IMR-90 (cell line): ENCODE measurements at regions of chr22 and their contacts with region 1.

Region 1: DNA sequence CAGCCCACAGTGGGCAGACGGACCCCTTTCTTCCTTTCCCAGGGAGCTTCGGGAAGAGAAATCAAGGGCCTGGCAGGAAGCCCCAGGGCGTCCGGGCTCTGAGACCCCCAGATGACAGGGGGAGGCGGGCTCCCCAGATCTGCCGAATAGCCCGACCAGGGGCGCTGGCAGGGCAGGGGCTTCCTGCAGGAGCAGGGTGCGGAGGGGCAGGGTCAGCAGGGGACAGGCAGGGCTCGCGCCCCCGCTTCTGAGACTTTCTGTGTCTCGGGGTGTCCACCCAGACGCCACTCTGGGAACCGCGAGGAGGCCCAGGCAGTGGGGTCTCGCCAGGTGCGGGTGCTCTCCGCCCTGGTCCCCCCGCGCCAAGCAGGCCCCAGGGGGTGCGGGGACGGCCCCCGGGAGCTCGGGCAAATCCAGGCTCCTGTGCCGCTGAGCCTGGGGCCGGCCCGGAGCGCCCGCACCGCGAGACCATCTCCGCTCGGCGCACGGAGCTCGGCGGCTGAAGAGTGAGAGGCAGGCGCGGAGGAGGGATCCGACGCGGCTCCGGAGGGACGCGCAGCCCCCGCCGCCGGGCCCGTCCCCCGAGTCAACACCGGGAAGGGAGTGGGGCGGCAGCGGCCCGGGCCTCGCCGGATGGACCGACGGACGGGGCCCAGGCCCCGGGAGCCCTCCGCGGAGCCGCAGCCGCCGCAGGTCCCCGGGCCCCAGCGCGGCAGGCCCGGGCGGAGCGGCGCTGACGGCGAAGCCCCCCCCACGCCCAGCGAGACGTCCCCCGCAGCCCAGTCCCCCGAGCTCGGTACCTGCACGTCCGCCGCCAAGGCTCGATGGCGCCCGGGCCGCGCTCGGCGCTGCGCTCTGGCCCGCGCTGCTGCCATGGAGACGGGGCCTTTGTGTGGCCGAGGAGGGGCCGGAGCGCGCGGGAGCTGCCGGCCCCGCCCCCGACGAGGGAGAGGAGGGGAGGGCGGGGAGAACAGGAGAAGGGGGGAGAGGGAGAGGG is at the start of gene PLXNB2:
- DNase-seq: peak; percentile 80
- ATAC-seq: peak; percentile 61
- H3K4me3 ChIP-seq: peak within 1 kb of the TSS; percentile 97
- H3K27ac ChIP-seq: peak within 1 kb of the TSS; percentile 96
- H3K4me1 ChIP-seq: peaks cover 48% of the 10 kb centered on the region
- H3K27me3 ChIP-seq: no peaks in the 10 kb centered on the region
- CTCF ChIP-seq: no peak
- POLR2A ChIP-seq: peak; percentile 69
- RAD21 ChIP-seq: no peak
- total RNA-seq, gene PLXNB2: 73.1 and 84.7 TPM in 2 replicates

Region 2: DNA sequence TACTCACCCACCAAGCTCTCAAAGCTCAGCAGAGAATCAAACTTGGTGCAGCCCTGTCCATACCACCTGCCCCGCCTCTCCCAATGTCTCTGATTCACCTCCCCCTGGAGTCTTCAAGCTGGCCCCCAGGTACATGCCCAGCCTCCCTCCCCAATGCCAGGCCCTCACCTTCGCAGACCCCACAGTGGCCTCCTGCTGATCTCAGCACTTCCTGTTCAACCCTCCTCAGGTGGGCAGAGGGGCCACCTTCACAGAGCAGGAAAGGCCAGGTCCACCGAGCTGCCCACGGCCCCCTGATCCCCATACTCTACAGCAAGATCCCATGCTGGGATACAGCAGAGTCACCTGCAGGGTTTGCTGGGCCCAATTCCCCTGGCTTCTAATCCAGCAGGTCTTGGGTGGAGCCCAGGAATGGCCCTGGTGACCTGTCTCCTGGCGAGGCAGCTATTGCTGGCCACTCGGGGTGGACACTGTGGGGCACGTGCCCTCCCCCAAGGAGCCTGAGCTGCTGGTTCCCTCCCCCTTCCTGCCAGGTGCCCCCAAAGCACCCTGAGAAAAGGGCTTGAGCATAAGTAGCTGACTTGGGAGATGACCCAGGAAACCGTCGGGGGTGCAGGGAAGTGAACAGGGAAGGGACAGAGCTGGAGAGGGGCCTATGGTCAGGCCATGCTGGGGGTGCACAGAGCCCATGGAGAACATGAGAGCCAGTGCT is 630.1 kb before region 1 on chr22:
- CTCF ChIA-PET with region 1: no interaction called
- POLR2A ChIA-PET with region 1: no interaction called
- dilution Hi-C with region 1: no loop called
- in situ Hi-C with region 1: no loop called
- intact Hi-C with region 1: no loop called
- DNase-seq: no peak
- ATAC-seq: no peak
- H3K4me3 ChIP-seq: no peak overlapping the region
- H3K27ac ChIP-seq: no peak overlapping the region
- H3K4me1 ChIP-seq: no peaks in the 10 kb centered on the region
- H3K27me3 ChIP-seq: peaks cover under 1% of the 10 kb centered on the region; the same call in 1 of the 2 replicates
- CTCF ChIP-seq: no peak
- POLR2A ChIP-seq: no peak
- RAD21 ChIP-seq: no peak

Region 3: DNA sequence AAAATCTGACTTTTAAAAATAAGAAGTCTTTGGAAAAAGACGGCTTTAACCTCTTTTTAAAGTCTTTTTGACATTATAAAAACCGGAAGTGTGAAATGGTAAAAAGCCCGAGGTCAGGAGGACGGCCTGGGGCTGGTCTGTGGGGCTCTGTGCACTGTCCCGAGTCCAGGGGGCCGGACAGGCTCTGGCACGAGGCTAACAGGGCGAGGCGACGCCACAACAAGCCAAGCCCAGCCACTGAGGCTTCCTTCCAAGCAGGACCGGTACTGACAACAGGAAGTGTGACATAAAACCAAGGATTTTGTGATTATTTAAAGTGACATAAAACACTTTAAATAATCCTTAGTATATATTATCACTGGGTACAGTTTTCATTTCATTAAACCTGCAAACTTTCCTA is 518.5 kb before region 1 on chr22:
- CTCF ChIA-PET with region 1: no interaction called
- POLR2A ChIA-PET with region 1: no interaction called
- dilution Hi-C with region 1: no loop called
- in situ Hi-C with region 1: no loop called
- intact Hi-C with region 1: no loop called
- DNase-seq: no peak
- ATAC-seq: no peak
- H3K4me3 ChIP-seq: no peak overlapping the region
- H3K27ac ChIP-seq: no peak overlapping the region
- H3K4me1 ChIP-seq: peaks cover 14% of the 10 kb centered on the region
- H3K27me3 ChIP-seq: no peaks in the 10 kb centered on the region
- CTCF ChIP-seq: no peak
- POLR2A ChIP-seq: no peak
- RAD21 ChIP-seq: no peak

Region 4: GRCh38 chr22:49970528-49971231 is 336.4 kb before region 1 on chr22:
- CTCF ChIA-PET with region 1: no interaction called
- POLR2A ChIA-PET with region 1: no interaction called
- dilution Hi-C with region 1: no loop called
- in situ Hi-C with region 1: no loop called
- intact Hi-C with region 1: no loop called
- DNase-seq: peak; percentile 97
- ATAC-seq: peak; percentile 89
- H3K4me3 ChIP-seq: peak overlapping the region; percentile 28
- H3K27ac ChIP-seq: peak overlapping the region; percentile 77
- H3K4me1 ChIP-seq: peaks cover 27% of the 10 kb centered on the region
- H3K27me3 ChIP-seq: no peaks in the 10 kb centered on the region
- CTCF ChIP-seq: no peak
- POLR2A ChIP-seq: peak; percentile 89
- RAD21 ChIP-seq: no peak

Region 5: GRCh38 chr22:50276143-50276542 is 30.9 kb before region 1 on chr22:
- CTCF ChIA-PET with region 1: interaction called, 3 read pairs
- POLR2A ChIA-PET with region 1: no interaction called
- dilution Hi-C with region 1: no loop called
- in situ Hi-C with region 1: no loop called
- intact Hi-C with region 1: loop called (anchors 5 kb)
- DNase-seq: peak; percentile 43
- ATAC-seq: peak; percentile 19
- H3K4me3 ChIP-seq: no peak overlapping the region
- H3K27ac ChIP-seq: no peak overlapping the region
- H3K4me1 ChIP-seq: peaks cover 6% of the 10 kb centered on the region; the same call in 1 of the 2 replicates
- H3K27me3 ChIP-seq: no peaks in the 10 kb centered on the region
- CTCF ChIP-seq: peak; percentile 87
- POLR2A ChIP-seq: no peak
- RAD21 ChIP-seq: peak; percentile 35

Region 6: GRCh38 chr22:50293441-50294318 is 13.4 kb before region 1 on chr22:
- CTCF ChIA-PET with region 1: no interaction called
- POLR2A ChIA-PET with region 1: interaction called, 6 read pairs
- dilution Hi-C with region 1: no loop called
- in situ Hi-C with region 1: no loop called
- intact Hi-C with region 1: loop called (anchors 2 kb)
- DNase-seq: peak; percentile 60
- ATAC-seq: peak; percentile 92
- H3K4me3 ChIP-seq: peak overlapping the region; percentile 41
- H3K27ac ChIP-seq: peak overlapping the region; percentile 100
- H3K4me1 ChIP-seq: peaks cover 34% of the 10 kb centered on the region
- H3K27me3 ChIP-seq: no peaks in the 10 kb centered on the region
- CTCF ChIP-seq: no peak
- POLR2A ChIP-seq: no peak
- RAD21 ChIP-seq: no peak

Region 7: DNA sequence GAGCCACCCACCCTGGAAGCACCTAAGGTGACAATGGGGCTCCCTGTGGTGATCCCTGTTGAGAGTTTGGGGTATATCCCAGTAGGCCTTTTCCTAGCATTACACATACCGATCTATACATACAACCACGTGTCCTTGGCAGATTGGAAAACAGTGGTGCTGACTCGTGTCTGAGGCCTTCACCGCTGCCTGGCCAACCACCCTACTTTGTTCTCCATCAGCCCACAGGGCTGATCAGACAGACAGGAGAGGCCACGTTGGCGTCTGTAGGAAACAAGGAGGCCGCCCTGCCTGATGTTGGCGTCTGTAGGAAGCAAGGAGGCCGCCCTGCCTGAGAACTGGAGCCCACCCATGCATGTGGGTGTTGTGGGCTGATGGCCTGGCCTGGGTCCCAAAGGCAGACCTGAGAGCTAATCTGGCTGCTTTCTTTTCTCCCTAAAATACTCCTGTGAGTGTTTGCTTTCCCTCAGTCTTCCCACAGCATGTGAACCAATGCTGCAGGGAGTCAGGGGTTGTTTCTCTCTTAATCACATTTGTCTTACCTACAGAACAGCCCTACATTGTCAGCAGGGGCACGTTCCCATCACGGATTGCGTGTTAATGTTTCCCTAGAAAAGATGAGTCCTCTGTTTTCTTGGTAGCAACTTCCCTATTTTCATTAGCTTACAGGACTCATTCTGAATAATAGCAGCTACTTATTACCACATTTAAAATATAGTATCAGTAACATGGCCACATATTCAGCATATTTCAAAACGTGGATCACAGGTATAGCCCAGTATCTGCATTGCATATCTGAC is 110.6 kb after region 1 on chr22:
- CTCF ChIA-PET with region 1: no interaction called
- POLR2A ChIA-PET with region 1: no interaction called
- dilution Hi-C with region 1: no loop called
- in situ Hi-C with region 1: no loop called
- intact Hi-C with region 1: no loop called
- DNase-seq: peak; percentile 15
- ATAC-seq: no peak
- H3K4me3 ChIP-seq: no peak overlapping the region
- H3K27ac ChIP-seq: no peak overlapping the region
- H3K4me1 ChIP-seq: no peaks in the 10 kb centered on the region
- H3K27me3 ChIP-seq: no peaks in the 10 kb centered on the region
- CTCF ChIP-seq: no peak
- POLR2A ChIP-seq: no peak
- RAD21 ChIP-seq: no peak